ENCODE measurements at regions of chr17 and their contacts with region 1.

Region 1: GRCh38 chr17:58504826-58505521 is 9.5 kb downstream of the MTMR4 start:
- DNase-seq: no peak
- ATAC-seq: no peak
- H3K4me3 ChIP-seq: no peak overlapping the region
- H3K27ac ChIP-seq: no peak overlapping the region
- H3K4me1 ChIP-seq: no peaks in the 10 kb centered on the region
- H3K27me3 ChIP-seq: no peaks in the 10 kb centered on the region
- CTCF ChIP-seq: no peak
- EP300 ChIP-seq: no peak
- POLR2A ChIP-seq: no peak
- RAD21 ChIP-seq: no peak

Region 2: GRCh38 chr17:58492238-58493121 is 12.5 kb before region 1 on chr17:
- CTCF ChIA-PET with region 1: no interaction called
- POLR2A ChIA-PET with region 1: interaction called, 26 read pairs
- in situ Hi-C with region 1: no loop called
- intact Hi-C with region 1: no loop called
- DNase-seq: peak; percentile 80 to 93 (median 86)
- ATAC-seq: peak; percentile 100
- H3K4me3 ChIP-seq: no peak overlapping the region
- H3K27ac ChIP-seq: peak overlapping the region; percentile 77; the same call in 2 of the 3 replicates
- H3K4me1 ChIP-seq: peaks cover 13 to 16% of the 10 kb centered on the region in 2 experiments; a peak in 4 of 5 replicates
- H3K27me3 ChIP-seq: no peaks in the 10 kb centered on the region
- CTCF ChIP-seq: no peak
- EP300 ChIP-seq: peak; percentile 95
- POLR2A ChIP-seq: no peak
- RAD21 ChIP-seq: no peak

Region 3: DNA sequence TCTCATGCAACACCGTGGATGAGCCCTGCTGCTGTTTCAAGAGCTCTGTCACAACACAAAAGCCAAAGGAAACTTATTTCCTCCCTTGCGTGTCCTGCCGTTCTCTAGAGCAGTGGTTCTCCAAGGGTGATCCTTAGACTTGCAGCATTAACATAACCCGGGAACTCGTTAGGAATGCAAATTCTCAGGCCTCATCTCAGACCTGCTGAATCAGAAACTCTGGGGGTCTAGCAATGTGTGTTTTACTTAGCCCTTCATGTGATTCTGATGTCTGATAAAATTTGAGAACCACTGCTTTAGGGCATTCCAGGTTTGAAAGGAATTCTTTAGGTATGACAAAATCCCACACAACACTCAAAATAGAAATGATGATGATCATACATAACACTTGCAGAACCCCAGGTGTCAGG is 60.8 kb after region 1 on chr17:
- CTCF ChIA-PET with region 1: no interaction called
- POLR2A ChIA-PET with region 1: no interaction called
- in situ Hi-C with region 1: no loop called
- intact Hi-C with region 1: no loop called
- DNase-seq: no peak
- ATAC-seq: no peak
- H3K4me3 ChIP-seq: no peak overlapping the region
- H3K27ac ChIP-seq: no peak overlapping the region
- H3K4me1 ChIP-seq: no peaks in the 10 kb centered on the region
- H3K27me3 ChIP-seq: peaks cover 2 to 6% of the 10 kb centered on the region in 2 experiments; a peak in 3 of 5 replicates
- CTCF ChIP-seq: no peak
- EP300 ChIP-seq: no peak
- POLR2A ChIP-seq: no peak
- RAD21 ChIP-seq: no peak

Measured in K562 (cell line).